IMR-90 (cell line): ENCODE measurements at regions of chr2 and their contacts with region 1.

Region 1: DNA sequence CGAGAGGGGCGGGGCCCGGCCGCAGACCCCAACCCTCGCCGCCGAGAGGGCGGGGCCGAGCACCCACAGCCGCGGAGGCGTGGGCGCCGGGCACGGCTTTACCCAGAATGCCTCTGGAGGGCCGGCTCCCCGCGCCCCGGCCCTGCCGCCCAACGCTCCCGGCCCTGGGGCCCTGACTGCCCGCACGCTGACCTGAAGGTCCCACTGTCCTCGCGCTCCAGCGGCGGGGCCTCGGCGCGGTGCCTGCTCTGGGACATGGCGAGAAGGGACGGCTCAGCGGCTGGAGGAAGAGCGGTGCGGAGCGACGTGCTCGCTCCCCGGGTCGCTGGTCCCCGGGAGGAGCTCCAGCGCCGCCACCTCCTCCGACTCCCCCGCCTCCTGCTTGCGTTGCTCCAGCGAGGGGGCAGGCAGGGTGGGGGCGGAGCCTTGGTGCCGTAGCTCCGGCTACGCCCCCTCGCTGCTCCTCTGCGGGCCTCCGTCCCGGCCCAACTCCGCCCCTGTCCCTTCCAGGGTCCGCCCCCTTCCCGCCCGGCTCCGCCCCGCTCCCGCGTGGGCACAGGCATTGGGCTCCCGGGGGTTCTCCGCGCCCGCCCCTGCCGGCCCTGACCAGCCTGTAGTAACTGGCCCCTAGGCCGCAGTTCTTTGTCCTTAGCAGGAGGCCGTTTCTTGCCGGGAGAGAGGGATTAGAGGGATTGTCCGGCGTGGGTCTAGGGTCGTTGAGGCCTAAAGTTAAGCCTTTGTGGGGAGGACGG is at the starts of genes PJVK and PRKRA:
- DNase-seq: peak; percentile 97
- ATAC-seq: peak; percentile 98
- H3K4me3 ChIP-seq: peak within 1 kb of the TSS; percentile 86
- H3K27ac ChIP-seq: peak within 1 kb of the TSS; percentile 98
- H3K4me1 ChIP-seq: peaks cover 6% of the 10 kb centered on the region
- H3K27me3 ChIP-seq: no peaks in the 10 kb centered on the region
- CTCF ChIP-seq: no peak; the same call in 1 of the 2 replicates
- POLR2A ChIP-seq: peak; percentile 94
- RAD21 ChIP-seq: no peak
- total RNA-seq, gene PJVK: 0.28 and 0.72 TPM in 2 replicates
- total RNA-seq, gene PRKRA: 53.6 and 55.5 TPM in 2 replicates

Region 2: GRCh38 chr2:178436662-178437061 is 14.3 kb before region 1 on chr2:
- CTCF ChIA-PET with region 1: interaction called, 3 read pairs
- POLR2A ChIA-PET with region 1: no interaction called
- dilution Hi-C with region 1: no loop called
- in situ Hi-C with region 1: no loop called
- intact Hi-C with region 1: loop called (anchors 1 kb)
- DNase-seq: no peak
- ATAC-seq: no peak
- H3K4me3 ChIP-seq: no peak overlapping the region
- H3K27ac ChIP-seq: no peak overlapping the region
- H3K4me1 ChIP-seq: no peaks in the 10 kb centered on the region
- H3K27me3 ChIP-seq: no peaks in the 10 kb centered on the region
- CTCF ChIP-seq: no peak
- POLR2A ChIP-seq: no peak
- RAD21 ChIP-seq: no peak

Region 3: DNA sequence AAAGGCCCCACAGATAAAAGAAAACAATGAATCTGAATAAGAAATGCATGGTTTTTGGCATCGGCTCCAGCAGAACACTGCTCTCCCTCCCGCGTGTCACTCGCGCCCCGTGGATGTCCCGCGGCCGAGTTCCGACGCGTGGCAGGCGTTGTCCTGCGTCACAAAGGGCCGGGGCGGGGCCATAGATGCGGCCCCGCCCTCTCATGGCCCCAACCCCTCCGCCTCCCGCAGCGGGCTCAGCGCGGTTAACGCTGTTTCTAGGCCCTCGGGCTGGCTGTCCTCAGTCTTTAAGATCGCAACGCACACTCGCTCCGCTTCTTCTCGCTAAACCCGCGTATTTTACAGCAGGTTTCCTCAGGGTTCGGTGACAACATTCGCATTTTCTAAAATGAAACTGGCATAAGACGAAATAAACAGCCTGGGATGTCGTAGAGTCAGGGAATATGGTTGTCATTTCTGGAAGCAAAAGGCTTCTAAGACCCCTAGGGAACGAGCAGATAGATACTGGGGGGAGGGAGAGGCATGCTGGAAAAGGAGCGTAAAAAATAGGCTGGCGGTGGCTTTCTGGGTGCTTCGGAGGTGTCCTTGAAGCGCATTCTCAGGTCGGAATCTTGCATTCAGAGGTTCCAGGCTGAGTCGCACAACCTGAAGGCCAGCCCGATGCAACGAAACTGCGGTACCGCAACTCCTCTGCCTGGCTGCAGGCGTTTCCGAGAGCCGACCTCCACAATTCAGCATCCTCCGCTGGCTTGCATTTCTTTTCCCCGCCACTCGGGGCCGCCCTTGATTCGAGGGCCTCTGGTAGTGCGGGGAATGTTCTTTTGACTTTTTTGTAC is 27.7 kb after region 1 on chr2 and contains the start of gene FKBP7:
- CTCF ChIA-PET with region 1: no interaction called
- POLR2A ChIA-PET with region 1: interaction called, 6 read pairs
- dilution Hi-C with region 1: no loop called
- in situ Hi-C with region 1: no loop called
- intact Hi-C with region 1: loop called (anchors 1 kb)
- DNase-seq: peak; percentile 77
- ATAC-seq: peak; percentile 69
- H3K4me3 ChIP-seq: peak within 1 kb of the TSS; percentile 83
- H3K27ac ChIP-seq: peak within 1 kb of the TSS; percentile 91
- H3K4me1 ChIP-seq: peaks cover 7% of the 10 kb centered on the region
- H3K27me3 ChIP-seq: no peaks in the 10 kb centered on the region
- CTCF ChIP-seq: peak; percentile 62
- POLR2A ChIP-seq: peak; percentile 84
- RAD21 ChIP-seq: peak; percentile 47
- total RNA-seq, gene FKBP7: 32.6 and 36.9 TPM in 2 replicates